ENCODE measurements at regions of chr16 and their contacts with region 1.

Region 1: GRCh38 chr16:35510701-35511100 is 2051.3 kb downstream of the TP53TG3F start:
- DNase-seq: no peak
- ATAC-seq: no peak
- H3K4me3 ChIP-seq: no peak overlapping the region
- H3K27ac ChIP-seq: no peak overlapping the region
- H3K4me1 ChIP-seq: no peaks in the 10 kb centered on the region
- H3K27me3 ChIP-seq: no peaks in the 10 kb centered on the region
- CTCF ChIP-seq: no peak
- EP300 ChIP-seq: no peak
- POLR2A ChIP-seq: no peak
- RAD21 ChIP-seq: no peak

Region 2: GRCh38 chr16:35139864-35140263 is 370.8 kb before region 1 on chr16:
- CTCF ChIA-PET with region 1: no interaction called
- POLR2A ChIA-PET with region 1: no interaction called
- RAD21 ChIA-PET with region 1: no interaction called
- SMC1A ChIA-PET with region 1: no interaction called
- in situ Hi-C with region 1: no loop called
- intact Hi-C with region 1: loop called (anchors 5 kb)
- DNase-seq: no peak
- ATAC-seq: no peak
- H3K4me3 ChIP-seq: no peak overlapping the region
- H3K27ac ChIP-seq: no peak overlapping the region
- H3K4me1 ChIP-seq: no peaks in the 10 kb centered on the region
- H3K27me3 ChIP-seq: no peaks in the 10 kb centered on the region
- CTCF ChIP-seq: no peak
- EP300 ChIP-seq: no peak
- POLR2A ChIP-seq: no peak
- RAD21 ChIP-seq: no peak

Region 3: DNA sequence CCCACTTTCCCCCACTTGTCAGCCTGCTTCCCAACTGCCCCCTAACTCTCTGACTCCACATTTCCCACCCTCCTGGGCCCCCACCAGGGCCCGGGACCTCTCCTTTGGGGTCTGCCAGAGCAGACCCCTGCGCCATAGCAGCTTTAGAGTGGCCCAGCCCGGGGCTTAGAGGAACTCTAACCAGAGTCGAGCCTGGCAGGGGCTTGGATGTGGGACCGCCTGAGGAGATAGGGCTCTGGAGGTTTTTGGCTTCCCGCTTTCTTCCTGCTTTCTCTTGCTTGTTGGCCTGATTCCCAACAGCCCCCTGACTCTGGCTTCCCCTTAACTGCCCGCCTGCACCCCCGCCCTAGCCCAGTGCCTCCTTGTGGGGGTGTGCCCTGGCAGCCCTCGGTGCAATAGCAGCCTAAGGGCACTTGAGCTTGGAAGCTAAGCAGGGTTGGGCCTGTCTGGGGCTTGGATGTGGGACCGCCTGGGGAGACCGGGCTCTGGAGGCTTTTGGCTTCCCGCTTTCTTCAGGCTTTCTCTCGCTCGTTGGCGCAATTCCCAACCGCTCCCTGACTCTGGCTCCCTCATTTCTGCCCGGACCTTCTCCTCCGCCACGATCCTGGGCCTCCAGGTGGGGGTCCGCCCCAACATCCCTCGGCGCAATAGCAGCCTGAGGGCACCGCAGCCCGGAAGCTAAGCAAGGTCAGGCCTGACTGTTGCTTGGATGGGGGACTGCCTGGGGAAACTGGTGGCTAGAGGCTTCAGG is 240.7 kb after region 1 on chr16:
- CTCF ChIA-PET with region 1: no interaction called
- POLR2A ChIA-PET with region 1: no interaction called
- RAD21 ChIA-PET with region 1: no interaction called
- SMC1A ChIA-PET with region 1: no interaction called
- in situ Hi-C with region 1: no loop called
- intact Hi-C with region 1: no loop called
- DNase-seq: no peak
- ATAC-seq: no peak
- H3K4me3 ChIP-seq: no peak overlapping the region
- H3K27ac ChIP-seq: no peak overlapping the region
- H3K4me1 ChIP-seq: no peaks in the 10 kb centered on the region
- H3K27me3 ChIP-seq: no peaks in the 10 kb centered on the region
- CTCF ChIP-seq: no peak
- EP300 ChIP-seq: no peak
- POLR2A ChIP-seq: no peak
- RAD21 ChIP-seq: no peak

Region 4: GRCh38 chr16:35792516-35793285 is 282.0 kb after region 1 on chr16:
- CTCF ChIA-PET with region 1: no interaction called
- POLR2A ChIA-PET with region 1: no interaction called
- RAD21 ChIA-PET with region 1: no interaction called
- SMC1A ChIA-PET with region 1: no interaction called
- in situ Hi-C with region 1: no loop called
- intact Hi-C with region 1: no loop called
- DNase-seq: no peak
- ATAC-seq: no peak
- H3K4me3 ChIP-seq: no peak overlapping the region
- H3K27ac ChIP-seq: no peak overlapping the region
- H3K4me1 ChIP-seq: no peaks in the 10 kb centered on the region
- H3K27me3 ChIP-seq: no peaks in the 10 kb centered on the region
- CTCF ChIP-seq: no peak
- EP300 ChIP-seq: no peak
- POLR2A ChIP-seq: no peak
- RAD21 ChIP-seq: no peak